Dorsolateral prefrontal cortex (tissue), 120 donors: ENCODE measurements at regions of chr9 and their contacts with region 1.

Region 1: GRCh38 chr9:124658165-124659017 is 112.7 kb downstream of the NR6A1 start:
- DNase-seq: peak; percentile 26 to 85 (median 77)
- H3K4me3 ChIP-seq: peak overlapping the region; percentile 48 to 82 (median 64)
- H3K27ac ChIP-seq: peak overlapping the region; percentile 51 to 96 (median 90)
- H3K27me3 ChIP-seq: no peaks in the 10 kb centered on the region
- CTCF ChIP-seq: peak in 3 of 56 donors; percentile 12 to 23 (median 23)

Region 2: GRCh38 chr9:124617471-124618141 is 40.8 kb before region 1 on chr9:
- intact Hi-C with region 1: loop called (anchors 5 kb)
- DNase-seq: peak; percentile 66 to 89 (median 85)
- H3K4me3 ChIP-seq: no peak overlapping the region
- H3K27ac ChIP-seq: no peak overlapping the region
- H3K27me3 ChIP-seq: no peaks in the 10 kb centered on the region
- CTCF ChIP-seq: peak; percentile 54 to 98 (median 94)

Region 3: GRCh38 chr9:124708633-124709291 is 50.4 kb after region 1 on chr9:
- intact Hi-C with region 1: loop called in 1 of 2 experiments (anchors 5 kb)
- DNase-seq: no peak
- H3K4me3 ChIP-seq: no peak overlapping the region
- H3K27ac ChIP-seq: no peak overlapping the region
- H3K27me3 ChIP-seq: no peaks in the 10 kb centered on the region
- CTCF ChIP-seq: no peak

Region 4: GRCh38 chr9:124764774-124765438 is 106.5 kb after region 1 on chr9:
- intact Hi-C with region 1: loop called in 1 of 2 experiments (anchors 5 kb)
- DNase-seq: no peak
- H3K4me3 ChIP-seq: no peak overlapping the region
- H3K27ac ChIP-seq: no peak overlapping the region
- H3K27me3 ChIP-seq: peaks cover 0 to 6% (median 0%) of the 10 kb centered on the region in 45 donors
- CTCF ChIP-seq: peak in 39 of 56 donors; percentile 13 to 59 (median 32)